A549 (cell line): ENCODE measurements at regions of chr3 and their contacts with region 1.

Region 1: GRCh38 chr3:170307671-170308403 is 49.7 kb upstream of the SKIL start:
- DNase-seq: peak; percentile 35 to 84
- ATAC-seq: peak; percentile 55 to 72; a peak in 3 of 6 replicates
- H3K4me3 ChIP-seq: no peak overlapping the region
- H3K27ac ChIP-seq: peak overlapping the region; percentile 42 to 74; a peak in 4 of 6 replicates
- H3K4me1 ChIP-seq: peaks cover 34% of the 10 kb centered on the region
- CTCF ChIP-seq: no peak
- EP300 ChIP-seq: no peak
- POLR2A ChIP-seq: no peak
- RAD21 ChIP-seq: no peak

Region 2: DNA sequence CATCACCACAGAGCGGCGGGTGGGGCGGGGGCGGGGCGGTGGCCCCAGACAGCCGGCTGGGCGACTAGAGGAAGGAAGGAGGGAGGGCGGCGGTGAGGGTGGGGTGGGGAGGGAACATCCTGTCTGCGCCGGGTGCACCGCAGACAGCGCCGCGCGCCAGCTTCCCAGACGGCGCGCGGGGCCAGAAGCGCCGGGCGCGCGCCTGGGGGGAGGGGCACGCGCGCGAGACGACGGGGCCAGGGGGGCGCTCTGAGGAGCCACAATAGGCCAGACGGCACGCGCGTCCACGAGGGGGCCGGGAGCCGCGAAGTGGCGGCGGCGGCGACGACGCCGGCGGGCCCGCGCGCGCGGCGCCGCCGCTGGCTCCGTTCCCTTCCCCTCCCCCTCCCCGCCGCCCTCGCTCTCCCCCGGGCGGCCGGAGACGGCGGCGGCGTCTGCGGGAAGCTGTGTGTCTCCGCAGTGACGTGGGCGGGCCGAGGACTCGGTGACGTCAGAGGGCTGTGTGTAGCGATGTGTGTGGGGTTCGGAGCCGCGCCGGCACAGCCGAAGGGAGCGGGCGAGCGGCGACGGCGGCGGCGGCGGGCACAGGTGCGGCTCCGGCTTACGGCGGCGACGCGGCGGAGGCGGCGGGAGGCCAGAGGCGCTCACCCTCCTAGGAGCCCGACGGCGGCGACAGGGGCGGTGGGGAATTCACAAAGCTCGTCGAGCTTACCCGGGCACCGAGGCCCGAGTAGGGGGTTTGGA is 49.5 kb after region 1 on chr3 and contains the start of gene SKIL:
- CTCF ChIA-PET with region 1: interaction called, 12 read pairs
- POLR2A ChIA-PET with region 1: interaction called, 13 read pairs
- DNase-seq: peak; percentile 80 to 97
- ATAC-seq: peak; percentile 69 to 76
- H3K4me3 ChIP-seq: peak within 1 kb of the TSS; percentile 75
- H3K27ac ChIP-seq: peak within 1 kb of the TSS; percentile 99
- H3K4me1 ChIP-seq: peaks cover 48% of the 10 kb centered on the region
- CTCF ChIP-seq: peak; percentile 31; the same call in 1 of the 3 replicates
- EP300 ChIP-seq: peak; percentile 60 to 68; a peak in 4 of 5 replicates
- POLR2A ChIP-seq: peak; percentile 74
- RAD21 ChIP-seq: peak in 1 of 2 experiments; percentile 2; a peak in 1 of 5 replicates
- polyA plus RNA-seq, gene SKIL: 53.7 and 64.2 TPM in 2 replicates